SK-N-SH (cell line): ENCODE measurements at regions of chr2 and their contacts with region 1.

Region 1: DNA sequence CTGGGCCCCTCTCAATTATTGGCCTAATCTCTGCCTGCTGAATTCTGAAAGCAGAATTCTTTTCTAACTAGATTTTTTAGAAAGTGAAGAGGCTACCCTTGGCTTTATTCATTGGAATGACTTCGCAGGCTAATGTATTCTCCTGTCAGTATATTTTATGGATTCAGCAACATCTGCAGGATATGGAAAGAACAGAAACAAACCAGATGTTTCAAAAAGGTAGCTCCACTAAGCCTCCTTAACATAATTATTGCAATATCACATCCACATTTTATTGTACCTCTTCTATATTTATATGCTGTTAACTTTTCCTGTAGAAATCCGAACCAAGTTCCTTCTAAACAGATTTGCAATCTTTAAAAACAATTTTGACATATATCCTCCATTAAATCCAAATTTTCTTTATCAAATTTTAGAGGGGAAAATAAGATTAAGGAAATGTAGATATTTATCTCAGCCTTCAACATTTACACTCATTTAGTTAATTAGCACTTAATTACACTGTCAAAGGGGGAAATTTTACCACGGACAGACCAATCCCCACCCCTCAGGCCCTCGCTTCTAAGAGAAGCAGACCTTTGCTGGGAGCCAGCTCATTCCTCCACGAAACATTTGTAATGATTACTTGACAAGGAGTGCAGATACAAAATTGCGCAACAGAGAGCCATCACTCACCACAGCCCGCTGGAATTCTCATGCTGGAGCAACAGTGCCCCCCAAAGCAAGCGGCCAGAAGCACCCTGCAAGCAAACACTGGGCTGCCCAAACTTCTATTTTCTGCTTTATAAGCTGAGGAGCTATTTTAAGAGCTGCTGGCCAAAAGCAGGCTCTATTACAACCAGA is 253.4 kb downstream of the ETAA1 start:
- DNase-seq: peak; percentile 67
- H3K4me3 ChIP-seq: no peak overlapping the region; a peak in 1 of 4 replicates
- H3K27ac ChIP-seq: peak overlapping the region; percentile 36 to 90; a peak in 3 of 4 replicates
- H3K4me1 ChIP-seq: peaks cover 26 to 29% of the 10 kb centered on the region in 2 experiments; a peak in 3 of 4 replicates
- H3K27me3 ChIP-seq: no peaks in the 10 kb centered on the region
- CTCF ChIP-seq: peak; percentile 91
- EP300 ChIP-seq: peak; percentile 68 to 83; a peak in 3 of 4 replicates
- RAD21 ChIP-seq: peak; percentile 95

Region 2: GRCh38 chr2:66429071-66429477 is 1221.4 kb before region 1 on chr2:
- CTCF ChIA-PET with region 1: interaction called, 22 read pairs
- POLR2A ChIA-PET with region 1: interaction called, 16 read pairs
- DNase-seq: peak; percentile 63
- H3K4me3 ChIP-seq: no peak overlapping the region; a peak in 1 of 4 replicates
- H3K27ac ChIP-seq: no peak overlapping the region
- H3K4me1 ChIP-seq: peaks cover 0 to 2% of the 10 kb centered on the region in 2 experiments; a peak in 1 of 4 replicates
- H3K27me3 ChIP-seq: no peaks in the 10 kb centered on the region
- CTCF ChIP-seq: peak; percentile 92
- EP300 ChIP-seq: no peak
- RAD21 ChIP-seq: peak; percentile 93

Region 3: DNA sequence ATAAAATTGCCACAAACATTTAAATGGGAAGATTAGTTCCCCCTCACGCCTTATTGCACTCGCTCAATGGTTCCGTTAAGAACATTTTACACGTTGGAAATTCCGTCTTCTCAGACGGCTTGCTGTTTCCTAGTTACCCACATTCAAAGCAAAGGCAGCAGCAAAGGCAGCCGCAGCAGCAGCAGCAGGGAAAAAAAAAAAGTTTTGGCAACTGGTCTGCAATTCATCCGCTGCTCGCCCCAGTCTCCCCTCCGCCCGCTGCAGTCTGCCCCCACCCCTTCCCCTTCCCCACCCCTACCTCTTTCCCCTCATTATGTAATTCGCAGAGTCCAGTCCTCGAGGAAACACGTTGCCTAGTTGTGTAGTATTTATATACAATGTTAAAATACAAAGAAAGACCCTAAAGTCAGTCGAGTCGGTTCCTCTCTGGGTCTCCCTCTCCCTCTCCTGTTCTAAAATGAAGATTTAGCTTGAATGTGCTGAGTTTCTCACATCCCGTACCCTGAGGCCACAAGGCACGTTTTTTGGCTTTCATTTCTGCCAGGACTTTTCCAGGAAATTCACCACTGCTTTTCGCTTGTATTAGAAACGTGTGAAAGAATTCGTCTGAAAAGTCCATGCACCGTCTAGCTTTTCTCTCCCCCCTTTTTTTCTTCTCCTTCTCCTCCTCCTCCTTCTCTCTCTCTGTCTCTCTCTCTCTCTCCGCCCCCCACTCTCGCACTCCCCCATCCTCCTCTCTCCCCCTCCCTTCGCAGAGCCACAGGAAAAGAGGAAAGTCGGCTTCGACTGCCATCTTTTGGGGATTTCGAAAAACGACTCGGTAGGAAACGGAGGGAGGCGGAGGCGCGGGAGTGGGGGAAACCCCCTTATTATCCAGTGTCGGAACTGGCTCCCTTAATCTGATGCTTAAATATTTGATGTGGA is 1075.5 kb before region 1 on chr2:
- CTCF ChIA-PET with region 1: interaction called, 19 read pairs
- POLR2A ChIA-PET with region 1: no interaction called
- DNase-seq: peak; percentile 91
- H3K4me3 ChIP-seq: peak overlapping the region; percentile 53 to 73
- H3K27ac ChIP-seq: peak overlapping the region; percentile 93 to 98
- H3K4me1 ChIP-seq: peaks cover 5 to 18% of the 10 kb centered on the region in 2 experiments; a peak in 3 of 4 replicates
- H3K27me3 ChIP-seq: no peaks in the 10 kb centered on the region
- CTCF ChIP-seq: peak; percentile 68
- EP300 ChIP-seq: peak in 1 of 2 experiments; percentile 32; a peak in 2 of 4 replicates
- RAD21 ChIP-seq: peak; percentile 82

Region 4: GRCh38 chr2:67476809-67477790 is 173.4 kb before region 1 on chr2:
- CTCF ChIA-PET with region 1: interaction called, 12 read pairs
- POLR2A ChIA-PET with region 1: no interaction called
- DNase-seq: peak; percentile 33
- H3K4me3 ChIP-seq: no peak overlapping the region
- H3K27ac ChIP-seq: peak overlapping the region in 1 of 2 experiments; percentile 22; a peak in 1 of 4 replicates
- H3K4me1 ChIP-seq: no peaks in the 10 kb centered on the region; a peak in 2 of 4 replicates
- H3K27me3 ChIP-seq: no peaks in the 10 kb centered on the region
- CTCF ChIP-seq: peak; percentile 73
- EP300 ChIP-seq: no peak
- RAD21 ChIP-seq: peak; percentile 84

Region 5: GRCh38 chr2:67638146-67638545 is 12.4 kb before region 1 on chr2:
- CTCF ChIA-PET with region 1: interaction called, 10 read pairs
- POLR2A ChIA-PET with region 1: no interaction called
- DNase-seq: no peak
- H3K4me3 ChIP-seq: no peak overlapping the region
- H3K27ac ChIP-seq: no peak overlapping the region
- H3K4me1 ChIP-seq: peaks cover 0 to 12% of the 10 kb centered on the region in 2 experiments; a peak in 2 of 4 replicates
- H3K27me3 ChIP-seq: no peaks in the 10 kb centered on the region
- CTCF ChIP-seq: no peak
- EP300 ChIP-seq: no peak
- RAD21 ChIP-seq: no peak

Region 6: GRCh38 chr2:68031542-68032160 is 381.1 kb after region 1 on chr2:
- CTCF ChIA-PET with region 1: interaction called, 22 read pairs
- POLR2A ChIA-PET with region 1: no interaction called
- DNase-seq: peak; percentile 48
- H3K4me3 ChIP-seq: no peak overlapping the region
- H3K27ac ChIP-seq: peak overlapping the region; percentile 50 to 80
- H3K4me1 ChIP-seq: peaks cover 4 to 23% of the 10 kb centered on the region in 2 experiments
- H3K27me3 ChIP-seq: no peaks in the 10 kb centered on the region
- CTCF ChIP-seq: peak; percentile 77
- EP300 ChIP-seq: no peak
- RAD21 ChIP-seq: peak; percentile 97